ENCODE measurements at regions of chr13 and their contacts with region 1.

Region 1: DNA sequence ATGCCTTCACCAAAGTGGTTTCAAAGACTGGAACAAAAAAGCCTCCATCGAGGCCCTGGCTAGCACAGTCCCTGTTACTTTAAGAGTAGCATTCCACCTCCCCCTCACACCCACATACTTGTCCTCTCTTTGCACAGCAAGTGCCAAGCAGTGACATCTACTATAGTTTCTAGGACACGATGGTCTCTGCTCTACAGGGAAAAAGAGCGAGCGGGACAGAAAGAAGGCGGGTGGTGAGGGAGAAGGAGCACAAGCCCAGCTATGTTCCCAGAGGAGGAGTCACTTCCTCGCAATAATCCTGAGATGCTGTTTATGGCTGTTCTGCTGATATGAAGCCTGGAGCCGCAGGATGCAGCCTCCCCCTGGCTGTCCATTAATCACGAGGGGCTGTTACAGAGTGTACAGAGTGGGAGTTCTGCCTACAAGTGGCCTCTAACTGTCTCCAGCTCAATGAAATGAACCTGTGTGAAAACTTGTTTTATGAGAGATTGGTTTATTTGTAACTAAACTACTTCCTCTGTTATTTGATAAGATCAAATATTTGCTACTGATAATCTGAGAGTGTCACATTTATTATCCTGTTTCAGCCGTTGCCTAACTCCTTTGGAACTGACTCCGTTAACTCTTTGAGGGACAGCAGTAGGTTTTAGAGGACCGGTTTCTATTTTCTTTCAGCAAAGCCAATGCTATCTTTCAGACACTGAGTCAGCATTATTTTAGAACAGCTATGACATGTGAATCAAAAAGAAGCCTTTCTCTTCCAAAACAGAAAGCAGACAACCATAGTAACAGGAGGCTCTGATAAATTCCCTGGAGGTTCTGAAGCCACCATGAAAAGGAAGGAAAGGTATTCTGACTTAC is 208.0 kb downstream of the SPRY2 start:
- DNase-seq: peak; percentile 45
- ATAC-seq: peak; percentile 84
- H3K4me3 ChIP-seq: peak overlapping the region; percentile 62
- H3K27ac ChIP-seq: peak overlapping the region; percentile 45
- H3K4me1 ChIP-seq: peaks cover 27% of the 10 kb centered on the region
- H3K27me3 ChIP-seq: no peaks in the 10 kb centered on the region
- CTCF ChIP-seq: no peak

Region 2: DNA sequence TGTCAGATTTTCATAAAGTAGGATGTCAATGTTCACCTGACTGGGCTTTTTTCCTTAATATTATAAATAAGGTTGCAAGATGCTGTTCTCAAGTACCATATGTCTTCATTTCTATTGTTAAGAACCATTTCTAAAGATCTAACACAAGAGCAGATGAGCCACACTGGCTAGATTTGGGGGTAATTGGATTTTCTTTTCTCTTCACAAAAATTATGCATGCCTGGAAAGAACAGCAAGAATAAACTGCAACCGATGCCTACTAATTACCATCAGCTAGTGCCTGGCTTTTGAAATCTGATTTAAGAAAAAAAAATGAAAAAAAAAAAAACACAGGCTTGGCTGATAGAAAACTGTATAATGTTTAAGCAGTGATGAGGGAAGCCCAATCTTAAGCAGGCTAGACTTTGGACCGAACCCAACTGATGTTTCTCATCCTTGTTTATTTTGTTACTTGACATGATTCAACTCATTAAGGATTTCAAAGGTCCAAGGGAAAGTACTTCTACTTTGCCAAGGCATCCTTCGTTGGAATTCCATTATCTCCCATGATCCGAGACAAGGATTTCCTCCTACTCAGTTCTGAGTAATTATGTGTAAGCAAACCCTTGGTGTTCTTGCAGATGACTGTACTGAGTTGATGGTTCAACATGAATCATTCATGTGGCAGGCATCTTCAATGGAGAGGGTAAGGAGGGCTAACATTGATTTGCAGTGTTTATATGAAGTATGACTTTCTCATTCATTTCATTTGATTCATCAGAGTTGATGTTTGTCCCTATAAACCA is 92.6 kb before region 1 on chr13:
- CTCF ChIA-PET with region 1: no interaction called
- POLR2A ChIA-PET with region 1: interaction called, 3 read pairs
- intact Hi-C with region 1: loop called (anchors 2 kb)
- DNase-seq: peak; percentile 95
- ATAC-seq: peak; percentile 87
- H3K4me3 ChIP-seq: no peak overlapping the region
- H3K27ac ChIP-seq: peak overlapping the region; percentile 91
- H3K4me1 ChIP-seq: peaks cover 50% of the 10 kb centered on the region
- H3K27me3 ChIP-seq: no peaks in the 10 kb centered on the region
- CTCF ChIP-seq: no peak

Region 3: DNA sequence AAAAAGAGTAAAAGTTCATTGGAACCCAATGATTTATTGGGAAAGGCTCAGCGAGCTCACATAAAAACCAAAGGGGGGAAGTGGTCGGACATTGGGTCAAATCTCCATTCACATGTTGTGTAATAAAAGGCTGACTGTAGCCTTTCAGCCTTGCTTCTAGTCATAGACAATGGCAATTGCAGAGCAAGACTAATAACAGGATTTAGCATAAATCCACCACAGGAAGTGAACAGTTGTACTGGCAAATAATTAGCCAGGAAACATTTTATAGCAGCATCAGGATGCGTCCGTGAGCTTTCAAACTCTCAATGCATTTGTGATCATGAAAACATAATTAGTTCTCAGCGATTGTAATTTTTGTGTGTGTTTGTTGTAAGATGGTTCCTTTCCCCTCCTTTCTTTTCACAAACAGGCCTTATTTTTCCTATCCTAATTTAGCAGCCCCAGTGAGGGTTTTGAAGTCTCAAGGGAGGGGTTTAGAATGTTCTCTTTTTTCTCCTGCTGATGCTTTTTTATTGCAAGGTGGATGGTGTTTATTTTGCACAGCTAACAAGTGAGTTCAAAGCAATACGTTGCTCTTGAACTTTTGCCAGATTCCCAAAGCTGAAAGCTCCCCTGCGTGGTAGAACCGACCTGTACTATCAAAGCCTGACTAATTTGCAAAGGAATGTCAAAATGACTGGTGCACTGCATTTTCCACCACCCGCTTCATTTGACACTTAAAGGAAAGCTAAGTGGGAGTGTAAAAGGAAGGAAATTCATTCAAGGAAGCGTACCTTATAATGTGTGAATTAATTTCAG is 102.4 kb after region 1 on chr13:
- CTCF ChIA-PET with region 1: no interaction called
- POLR2A ChIA-PET with region 1: no interaction called
- intact Hi-C with region 1: loop called (anchors 10 kb)
- DNase-seq: peak; percentile 85
- ATAC-seq: peak; percentile 85
- H3K4me3 ChIP-seq: peak overlapping the region; percentile 42
- H3K27ac ChIP-seq: peak overlapping the region; percentile 68
- H3K4me1 ChIP-seq: peaks cover 32% of the 10 kb centered on the region
- H3K27me3 ChIP-seq: no peaks in the 10 kb centered on the region
- CTCF ChIP-seq: no peak

Measured in PC-3 (cell line).